ENCODE measurements at regions of chr16 and their contacts with region 1.

Region 1: DNA sequence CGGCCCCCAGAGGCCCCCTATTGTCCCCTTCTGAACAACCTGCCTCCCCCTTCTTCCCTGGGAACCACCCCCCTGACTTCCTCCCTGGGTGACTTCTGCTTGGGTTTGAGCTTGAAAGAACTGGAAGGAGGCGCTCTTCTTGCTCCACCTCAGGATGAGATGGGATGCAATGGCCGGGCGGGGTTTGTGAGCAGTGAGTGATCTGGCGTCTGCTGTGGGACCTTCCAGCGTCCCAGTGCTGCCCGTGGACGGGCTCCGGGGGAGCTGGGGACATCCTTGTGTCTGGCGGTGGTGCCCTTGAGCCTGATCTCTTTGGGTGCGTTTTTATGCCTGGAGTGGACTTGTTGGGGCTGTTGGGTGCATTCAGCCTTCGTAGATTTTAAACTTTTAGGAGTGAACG is 11.6 kb downstream of the MGRN1 start:
- DNase-seq: no peak
- ATAC-seq: no peak
- H3K4me3 ChIP-seq: no peak overlapping the region
- H3K27ac ChIP-seq: no peak overlapping the region
- H3K4me1 ChIP-seq: peaks cover 5% of the 10 kb centered on the region; the same call in 1 of the 2 replicates
- H3K27me3 ChIP-seq: no peaks in the 10 kb centered on the region
- CTCF ChIP-seq: no peak
- EP300 ChIP-seq: no peak
- POLR2A ChIP-seq: no peak
- RAD21 ChIP-seq: no peak

Region 2: DNA sequence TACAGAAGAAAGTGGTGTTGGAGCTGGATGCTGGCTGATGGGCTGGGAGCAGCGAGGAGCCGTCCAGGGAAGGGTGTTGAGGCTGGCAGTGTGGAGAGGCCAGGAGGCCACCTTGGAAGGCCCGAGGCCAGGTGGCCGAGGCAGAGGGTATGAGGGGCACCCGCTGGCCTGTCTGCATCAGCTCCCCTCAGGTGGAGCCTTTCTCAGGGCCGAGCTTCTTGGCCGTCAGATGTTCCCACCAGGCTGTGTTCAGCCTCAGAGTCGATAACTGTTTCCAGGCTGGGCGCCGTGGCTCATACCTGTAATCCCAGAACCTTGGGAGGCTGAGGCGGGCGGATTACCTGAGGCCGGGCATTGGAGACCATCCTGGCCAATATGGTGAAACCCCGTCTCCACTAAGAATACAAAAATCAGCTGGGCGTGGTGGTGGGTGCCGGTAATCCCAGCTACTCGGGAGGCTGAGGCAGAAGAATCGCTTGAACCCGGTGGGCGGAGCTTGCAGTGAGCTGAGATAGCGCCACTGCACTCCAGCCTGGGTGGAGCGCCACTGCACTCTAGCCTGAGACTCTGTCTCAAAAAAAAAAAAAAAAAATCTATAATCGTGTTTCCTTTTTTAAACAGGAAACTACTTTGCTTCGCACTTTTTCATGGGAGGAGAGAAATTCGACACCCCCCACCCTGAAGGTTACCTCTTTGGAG is 13.7 kb after region 1 on chr16:
- CTCF ChIA-PET with region 1: interaction called, 5 read pairs
- POLR2A ChIA-PET with region 1: no interaction called
- RAD21 ChIA-PET with region 1: no interaction called
- SMC1A ChIA-PET with region 1: no interaction called
- in situ Hi-C with region 1: no loop called
- intact Hi-C with region 1: loop called (anchors 1 kb)
- DNase-seq: no peak
- ATAC-seq: no peak; the same call in 2 of the 3 replicates
- H3K4me3 ChIP-seq: no peak overlapping the region
- H3K27ac ChIP-seq: no peak overlapping the region
- H3K4me1 ChIP-seq: no peaks in the 10 kb centered on the region
- H3K27me3 ChIP-seq: no peaks in the 10 kb centered on the region
- CTCF ChIP-seq: no peak
- EP300 ChIP-seq: no peak
- POLR2A ChIP-seq: no peak
- RAD21 ChIP-seq: no peak

Measured in GM12878 (cell line).